ENCODE measurements at regions of chr5 and their contacts with region 1.

Region 1: GRCh38 chr5:139482050-139482889 is at the start of gene STING1:
- DNase-seq: peak; percentile 77
- ATAC-seq: peak; percentile 80
- H3K4me3 Mint-ChIP-seq: peak within 1 kb of the TSS; percentile 80
- H3K27ac Mint-ChIP-seq: peak within 1 kb of the TSS; percentile 91
- H3K4me1 Mint-ChIP-seq: peaks cover 34% of the 10 kb centered on the region
- H3K27me3 Mint-ChIP-seq: no peaks in the 10 kb centered on the region
- CTCF ChIP-seq: no peak
- total RNA-seq, gene STING1: 43.7 to 46.3 TPM

Region 2: GRCh38 chr5:139470821-139471300 is 11.4 kb before region 1 on chr5 and contains the start of gene SMIM33:
- CTCF ChIA-PET with region 1: interaction called, 4 read pairs
- POLR2A ChIA-PET with region 1: interaction called, 21 read pairs
- intact Hi-C with region 1: no loop called
- DNase-seq: peak; percentile 39
- ATAC-seq: peak; percentile 64
- H3K4me3 Mint-ChIP-seq: peak within 1 kb of the TSS; percentile 69
- H3K27ac Mint-ChIP-seq: peak within 1 kb of the TSS; percentile 93
- H3K4me1 Mint-ChIP-seq: peaks cover 64% of the 10 kb centered on the region
- H3K27me3 Mint-ChIP-seq: no peaks in the 10 kb centered on the region
- CTCF ChIP-seq: no peak
- total RNA-seq, gene SMIM33: 0.16 TPM in 1 of 2 experiments, not detected in the other

Region 3: GRCh38 chr5:139495638-139496435 is 13.6 kb after region 1 on chr5:
- CTCF ChIA-PET with region 1: interaction called, 4 read pairs
- POLR2A ChIA-PET with region 1: interaction called, 14 read pairs
- intact Hi-C with region 1: no loop called
- DNase-seq: no peak
- ATAC-seq: peak; percentile 64
- H3K4me3 Mint-ChIP-seq: no peak overlapping the region
- H3K27ac Mint-ChIP-seq: peak overlapping the region; percentile 12
- H3K4me1 Mint-ChIP-seq: peaks cover 17% of the 10 kb centered on the region
- H3K27me3 Mint-ChIP-seq: no peaks in the 10 kb centered on the region
- CTCF ChIP-seq: no peak

Region 4: DNA sequence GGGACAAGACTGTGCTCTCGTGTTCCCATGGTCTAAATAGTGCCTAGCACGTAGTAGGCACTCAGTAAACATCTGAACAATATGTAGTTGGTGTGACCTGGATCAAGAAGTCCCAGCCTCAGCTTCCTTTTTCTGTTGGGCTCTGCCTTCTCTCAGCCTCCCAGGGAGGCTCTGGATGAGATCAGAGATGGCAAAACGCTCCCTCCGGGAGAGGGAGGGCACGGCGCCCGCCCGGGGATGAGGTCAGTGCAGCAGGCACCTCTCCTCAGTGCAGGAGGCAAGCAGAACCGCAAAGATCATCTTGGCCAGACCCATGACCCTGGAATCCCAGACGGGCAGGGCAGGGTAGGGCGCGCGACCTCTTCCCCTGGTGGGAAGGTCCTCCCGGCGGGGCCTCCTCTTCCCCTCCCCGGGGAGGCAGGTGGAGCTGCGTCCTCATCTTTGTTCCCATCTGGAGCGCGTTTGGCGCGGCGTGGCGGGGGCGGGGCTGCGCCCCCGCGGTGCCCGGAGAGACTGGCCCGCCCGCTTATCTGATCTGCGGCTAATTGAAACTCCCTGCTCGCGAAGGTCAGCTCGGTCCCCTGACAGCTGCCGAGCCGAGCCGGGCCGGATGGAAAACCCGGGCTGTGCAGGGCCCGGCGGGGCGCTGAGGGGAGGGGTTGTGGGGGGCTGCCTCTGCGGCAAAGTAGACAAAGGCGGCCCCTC is 226.8 kb after region 1 on chr5:
- CTCF ChIA-PET with region 1: no interaction called
- POLR2A ChIA-PET with region 1: no interaction called
- intact Hi-C with region 1: no loop called
- DNase-seq: no peak
- ATAC-seq: no peak
- H3K4me3 Mint-ChIP-seq: no peak overlapping the region
- H3K27ac Mint-ChIP-seq: peak overlapping the region; percentile 30
- H3K4me1 Mint-ChIP-seq: peaks cover 32% of the 10 kb centered on the region
- H3K27me3 Mint-ChIP-seq: no peaks in the 10 kb centered on the region
- CTCF ChIP-seq: no peak

Measured in activated CD8-positive, alpha-beta T cell treated with anti-CD3 and anti-CD28 coated beads for 36 hours (primary cell).